Dorsolateral prefrontal cortex (tissue), 120 donors: ENCODE measurements at regions of chr11 and their contacts with region 1.

Region 1: GRCh38 chr11:95231127-95231880 is at the start of gene SESN3:
- DNase-seq: peak; percentile 90 to 100 (median 98)
- H3K4me3 ChIP-seq: peak within 1 kb of the TSS; percentile 65 to 96 (median 87)
- H3K27ac ChIP-seq: peak within 1 kb of the TSS; percentile 59 to 99 (median 95)
- H3K27me3 ChIP-seq: no peaks in the 10 kb centered on the region
- CTCF ChIP-seq: peak in 32 of 56 donors; percentile 2 to 47 (median 22)
- total RNA-seq, gene SESN3: 59.6 to 186 (median 116) TPM

Region 2: DNA sequence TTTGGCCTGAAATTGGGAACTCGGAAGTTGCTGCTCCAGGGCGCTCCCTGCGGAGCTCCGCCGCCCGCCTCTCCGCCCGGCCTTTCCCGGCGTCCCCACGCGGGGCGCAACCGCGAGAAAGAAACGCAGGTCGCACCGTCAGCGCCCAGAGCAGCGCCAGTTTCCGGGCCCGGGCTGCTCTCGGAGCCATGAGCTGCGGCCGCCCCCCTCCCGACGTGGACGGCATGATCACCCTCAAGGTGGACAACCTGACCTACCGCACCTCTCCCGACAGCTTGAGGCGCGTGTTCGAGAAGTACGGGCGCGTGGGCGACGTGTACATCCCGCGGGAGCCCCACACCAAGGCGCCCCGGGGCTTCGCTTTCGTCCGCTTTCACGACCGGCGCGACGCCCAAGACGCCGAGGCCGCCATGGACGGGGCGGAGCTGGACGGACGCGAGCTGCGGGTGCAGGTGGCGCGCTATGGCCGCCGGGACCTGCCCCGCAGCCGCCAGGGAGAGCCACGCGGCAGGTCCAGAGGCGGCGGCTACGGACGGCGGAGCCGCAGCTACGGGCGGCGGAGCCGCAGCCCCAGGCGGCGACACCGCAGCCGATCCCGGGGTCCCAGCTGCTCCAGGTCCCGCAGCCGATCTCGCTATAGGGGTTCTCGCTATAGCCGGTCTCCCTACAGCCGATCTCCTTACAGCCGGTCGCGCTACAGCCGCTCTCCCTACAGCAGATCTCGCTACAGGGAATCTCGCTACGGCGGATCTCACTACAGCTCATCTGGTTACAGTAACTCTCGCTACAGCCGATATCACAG is 164.1 kb before region 1 on chr11:
- intact Hi-C with region 1: loop called in 1 of 2 experiments (anchors 2 kb)
- DNase-seq: peak; percentile 73 to 89 (median 82)
- H3K4me3 ChIP-seq: peak overlapping the region; percentile 68 to 96 (median 83)
- H3K27ac ChIP-seq: peak overlapping the region; percentile 88 to 99 (median 96)
- H3K27me3 ChIP-seq: no peaks in the 10 kb centered on the region
- CTCF ChIP-seq: peak in 52 of 56 donors; percentile 20 to 66 (median 49)

Region 3: DNA sequence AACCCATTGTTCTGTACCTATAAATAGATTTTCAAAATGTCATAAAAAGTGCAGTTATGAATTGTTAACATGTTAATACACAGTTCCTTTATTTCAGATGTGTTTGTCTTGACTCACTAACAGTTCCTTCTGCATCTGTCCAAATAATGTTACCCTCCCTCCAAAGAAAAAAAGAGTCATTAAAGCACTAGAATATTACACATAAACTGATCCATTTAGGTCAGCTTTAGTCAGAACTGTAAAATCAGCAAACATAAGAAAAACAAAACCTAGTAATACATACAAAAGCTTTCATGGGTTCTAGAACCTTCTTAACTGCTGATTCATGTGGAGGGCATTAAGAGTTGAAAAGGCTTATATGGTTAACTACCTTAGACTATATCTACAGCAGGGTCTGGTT is 65.7 kb before region 1 on chr11:
- intact Hi-C with region 1: no loop called
- DNase-seq: no peak
- H3K4me3 ChIP-seq: no peak overlapping the region
- H3K27ac ChIP-seq: no peak overlapping the region
- H3K27me3 ChIP-seq: no peaks in the 10 kb centered on the region
- CTCF ChIP-seq: no peak

Region 4: GRCh38 chr11:95254131-95254704 is 22.9 kb after region 1 on chr11:
- intact Hi-C with region 1: loop called in 1 of 2 experiments (anchors 2 kb)
- DNase-seq: peak; percentile 59 to 95 (median 86)
- H3K4me3 ChIP-seq: peak overlapping the region in 58 of 59 donors; percentile 5 to 71 (median 49)
- H3K27ac ChIP-seq: peak overlapping the region; percentile 13 to 94 (median 81)
- H3K27me3 ChIP-seq: no peaks in the 10 kb centered on the region
- CTCF ChIP-seq: peak in 9 of 56 donors; percentile 6 to 31 (median 20)

Region 5: GRCh38 chr11:95567685-95568084 is 336.4 kb after region 1 on chr11:
- intact Hi-C with region 1: loop called in 1 of 2 experiments (anchors 5 kb)
- DNase-seq: no peak
- H3K4me3 ChIP-seq: no peak overlapping the region
- H3K27ac ChIP-seq: peak overlapping the region in 2 of 59 donors; percentile 1 to 33
- H3K27me3 ChIP-seq: no peaks in the 10 kb centered on the region
- CTCF ChIP-seq: no peak

Region 6: DNA sequence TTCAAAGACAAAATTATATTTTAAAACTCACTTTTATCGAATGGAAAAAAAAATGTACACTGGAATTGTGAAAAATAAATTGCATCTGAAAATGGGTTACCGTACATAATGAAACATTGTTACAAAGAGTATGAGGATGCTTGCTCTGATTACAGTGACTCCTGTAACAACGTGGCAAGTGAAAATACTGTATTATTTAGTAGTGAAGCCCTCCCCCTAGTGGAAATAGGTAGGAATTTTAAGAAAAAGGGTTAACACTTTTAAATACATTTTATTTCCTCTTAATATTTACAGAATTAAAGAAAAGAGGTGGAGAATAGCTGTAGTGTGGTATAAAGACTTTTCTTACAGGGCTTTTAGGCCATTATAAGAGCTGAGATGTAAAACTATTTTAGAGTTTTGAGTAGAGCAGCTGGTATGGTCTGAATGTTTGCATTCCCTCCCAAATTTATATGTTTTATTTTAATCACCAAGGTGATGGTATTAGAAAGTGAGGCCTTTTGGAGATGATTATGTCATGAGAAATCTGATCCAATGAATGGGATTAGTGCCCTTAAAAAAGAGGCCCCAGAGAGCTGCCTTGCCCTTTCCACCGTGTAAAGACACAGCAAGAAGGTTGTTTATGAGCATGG is 533.1 kb after region 1 on chr11:
- intact Hi-C with region 1: loop called (anchors 10 kb)
- DNase-seq: no peak
- H3K4me3 ChIP-seq: peak overlapping the region in 2 of 59 donors; percentile 12 to 22
- H3K27ac ChIP-seq: no peak overlapping the region
- H3K27me3 ChIP-seq: no peaks in the 10 kb centered on the region
- CTCF ChIP-seq: peak; percentile 69 to 99 (median 85)